ENCODE measurements at regions of chr9 and their contacts with region 1.

Region 1: DNA sequence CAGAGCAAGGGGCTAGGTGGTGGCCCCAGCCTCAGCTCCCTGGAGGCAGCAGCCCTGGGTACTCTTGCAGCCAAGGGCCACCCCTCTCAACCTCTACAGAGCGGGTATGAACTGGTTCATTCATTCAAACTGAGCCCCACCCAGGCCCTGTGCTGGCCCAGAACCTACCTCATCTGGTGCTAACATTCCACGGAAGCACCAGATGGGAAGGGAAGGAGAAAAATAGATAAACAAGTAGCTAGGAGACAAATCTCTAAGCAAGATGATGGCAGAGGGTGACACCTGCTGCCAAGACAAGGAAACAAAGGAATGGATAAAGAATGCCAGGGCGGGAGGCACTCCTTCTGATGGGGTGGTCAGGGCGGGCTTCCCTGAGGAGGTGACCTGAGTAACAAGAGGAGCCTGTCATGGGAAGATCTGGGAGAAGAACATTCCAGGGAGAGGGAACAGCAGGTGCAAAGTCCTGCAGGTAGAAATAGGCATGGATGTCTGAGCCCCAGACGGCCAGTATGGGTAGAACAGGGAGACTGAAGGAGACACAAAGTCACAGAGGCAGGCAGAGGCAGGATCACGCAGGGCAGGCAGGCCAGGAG is 6.1 kb downstream of the ST6GALNAC4 start:
- DNase-seq: no peak
- H3K4me3 ChIP-seq: no peak overlapping the region
- H3K27ac ChIP-seq: no peak overlapping the region
- H3K4me1 ChIP-seq: peaks cover 4% of the 10 kb centered on the region
- H3K27me3 ChIP-seq: no peaks in the 10 kb centered on the region
- CTCF ChIP-seq: peak in 1 of 4 experiments; percentile 36
- POLR2A ChIP-seq: no peak

Region 2: GRCh38 chr9:127828262-127829031 is 82.3 kb before region 1 on chr9:
- intact Hi-C with region 1: no loop called
- DNase-seq: peak; percentile 53
- H3K4me3 ChIP-seq: peak overlapping the region; percentile 15 to 16
- H3K27ac ChIP-seq: peak overlapping the region; percentile 57
- H3K4me1 ChIP-seq: no peaks in the 10 kb centered on the region
- H3K27me3 ChIP-seq: no peaks in the 10 kb centered on the region
- CTCF ChIP-seq: peak in 1 of 4 experiments; percentile 13
- POLR2A ChIP-seq: peak; percentile 72

Region 3: DNA sequence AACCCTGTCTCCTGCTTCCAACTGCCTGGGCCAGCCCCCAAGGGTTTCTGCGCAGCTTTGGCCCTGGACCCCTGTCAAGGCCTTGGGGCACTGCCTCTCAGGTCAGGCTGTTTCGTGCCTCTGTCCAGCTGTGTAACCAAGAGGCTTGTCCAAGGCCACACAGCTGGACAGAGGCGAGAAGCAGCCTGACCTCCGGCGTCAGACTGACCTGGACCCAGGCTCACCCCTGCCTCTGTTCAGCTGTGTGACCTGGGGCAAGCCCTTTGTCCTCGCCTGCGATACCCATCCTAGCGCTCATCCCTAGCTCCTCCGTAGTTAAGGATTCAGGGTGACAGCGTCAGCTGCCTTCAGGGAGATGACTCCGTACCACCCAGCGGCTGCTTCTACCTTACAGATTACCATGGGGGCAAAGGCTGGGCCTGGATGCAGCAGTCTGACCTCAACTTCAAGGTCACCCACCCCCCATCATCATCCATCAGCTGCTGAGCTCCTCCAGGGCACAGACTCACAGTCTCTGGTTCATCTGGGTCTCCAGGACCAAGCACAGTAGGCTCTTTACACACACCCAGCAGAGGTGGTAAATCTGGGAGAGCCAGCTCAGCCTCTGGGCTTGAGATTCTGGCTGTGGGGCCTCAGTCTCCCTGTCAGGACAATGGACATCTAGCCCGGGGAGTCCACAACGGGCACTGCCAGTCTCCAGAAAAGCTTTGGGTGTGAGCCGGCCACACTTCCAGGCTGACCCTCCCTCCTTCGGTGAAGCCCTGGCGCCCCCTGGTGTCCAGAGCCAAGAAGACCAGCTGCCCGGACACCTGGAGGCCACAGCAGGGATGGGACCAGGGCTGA is 41.2 kb before region 1 on chr9:
- intact Hi-C with region 1: loop called (anchors 5 kb)
- DNase-seq: peak; percentile 67
- H3K4me3 ChIP-seq: no peak overlapping the region
- H3K27ac ChIP-seq: no peak overlapping the region
- H3K4me1 ChIP-seq: peaks cover 8% of the 10 kb centered on the region
- H3K27me3 ChIP-seq: no peaks in the 10 kb centered on the region
- CTCF ChIP-seq: peak; percentile 51 to 91 (median 78)
- POLR2A ChIP-seq: no peak